ENCODE measurements at regions of chr1 and their contacts with region 1.

Region 1: GRCh38 chr1:110674337-110675059 is at the start of gene KCNA3:
- DNase-seq: peak; percentile 82
- ATAC-seq: peak; percentile 35
- H3K4me3 Mint-ChIP-seq: peak within 1 kb of the TSS; percentile 100
- H3K27ac Mint-ChIP-seq: peak within 1 kb of the TSS; percentile 99
- H3K4me1 Mint-ChIP-seq: peaks cover 31% of the 10 kb centered on the region
- H3K27me3 Mint-ChIP-seq: no peaks in the 10 kb centered on the region
- total RNA-seq, gene KCNA3: 68.4 to 74.0 TPM

Region 2: GRCh38 chr1:110734133-110734680 is 59.7 kb after region 1 on chr1:
- POLR2A ChIA-PET with region 1: no interaction called
- DNase-seq: no peak
- ATAC-seq: no peak
- H3K4me3 Mint-ChIP-seq: no peak overlapping the region
- H3K27ac Mint-ChIP-seq: no peak overlapping the region
- H3K4me1 Mint-ChIP-seq: no peaks in the 10 kb centered on the region
- H3K27me3 Mint-ChIP-seq: peaks cover 10% of the 10 kb centered on the region

Region 3: GRCh38 chr1:110746579-110747160 is 72.2 kb after region 1 on chr1:
- POLR2A ChIA-PET with region 1: no interaction called
- DNase-seq: peak; percentile 69
- ATAC-seq: peak; percentile 58
- H3K4me3 Mint-ChIP-seq: no peak overlapping the region
- H3K27ac Mint-ChIP-seq: no peak overlapping the region
- H3K4me1 Mint-ChIP-seq: peaks cover 2% of the 10 kb centered on the region
- H3K27me3 Mint-ChIP-seq: peaks cover 38% of the 10 kb centered on the region

Region 4: GRCh38 chr1:110766025-110766647 is 91.6 kb after region 1 on chr1:
- POLR2A ChIA-PET with region 1: interaction called, 26 read pairs
- DNase-seq: no peak
- ATAC-seq: peak; percentile 78
- H3K4me3 Mint-ChIP-seq: peak overlapping the region; percentile 58
- H3K27ac Mint-ChIP-seq: peak overlapping the region; percentile 32
- H3K4me1 Mint-ChIP-seq: peaks cover 10% of the 10 kb centered on the region
- H3K27me3 Mint-ChIP-seq: peaks cover 28% of the 10 kb centered on the region

Measured in activated naive CD8-positive, alpha-beta T cell treated with anti-CD3 and anti-CD28 coated beads, Interleukin-2, amount 10 ng/mL, durations not matched to agents 7 days and 5 days (primary cell).